ENCODE measurements at regions of chr11 and their contacts with region 1.

Region 1: GRCh38 chr11:71787098-71787823 is 45.7 kb upstream of the DEFB108B start:
- DNase-seq: peak; percentile 97
- H3K4me3 ChIP-seq: peak overlapping the region; percentile 56 to 78 (median 63)
- H3K27ac ChIP-seq: peak overlapping the region; percentile 71 to 92 (median 87)
- H3K4me1 ChIP-seq: peaks cover 0 to 11% (median 3%) of the 10 kb centered on the region in 4 donors
- H3K27me3 ChIP-seq: no peaks in the 10 kb centered on the region
- CTCF ChIP-seq: no peak
- EP300 ChIP-seq: no peak
- POLR2A ChIP-seq: no peak

Region 2: DNA sequence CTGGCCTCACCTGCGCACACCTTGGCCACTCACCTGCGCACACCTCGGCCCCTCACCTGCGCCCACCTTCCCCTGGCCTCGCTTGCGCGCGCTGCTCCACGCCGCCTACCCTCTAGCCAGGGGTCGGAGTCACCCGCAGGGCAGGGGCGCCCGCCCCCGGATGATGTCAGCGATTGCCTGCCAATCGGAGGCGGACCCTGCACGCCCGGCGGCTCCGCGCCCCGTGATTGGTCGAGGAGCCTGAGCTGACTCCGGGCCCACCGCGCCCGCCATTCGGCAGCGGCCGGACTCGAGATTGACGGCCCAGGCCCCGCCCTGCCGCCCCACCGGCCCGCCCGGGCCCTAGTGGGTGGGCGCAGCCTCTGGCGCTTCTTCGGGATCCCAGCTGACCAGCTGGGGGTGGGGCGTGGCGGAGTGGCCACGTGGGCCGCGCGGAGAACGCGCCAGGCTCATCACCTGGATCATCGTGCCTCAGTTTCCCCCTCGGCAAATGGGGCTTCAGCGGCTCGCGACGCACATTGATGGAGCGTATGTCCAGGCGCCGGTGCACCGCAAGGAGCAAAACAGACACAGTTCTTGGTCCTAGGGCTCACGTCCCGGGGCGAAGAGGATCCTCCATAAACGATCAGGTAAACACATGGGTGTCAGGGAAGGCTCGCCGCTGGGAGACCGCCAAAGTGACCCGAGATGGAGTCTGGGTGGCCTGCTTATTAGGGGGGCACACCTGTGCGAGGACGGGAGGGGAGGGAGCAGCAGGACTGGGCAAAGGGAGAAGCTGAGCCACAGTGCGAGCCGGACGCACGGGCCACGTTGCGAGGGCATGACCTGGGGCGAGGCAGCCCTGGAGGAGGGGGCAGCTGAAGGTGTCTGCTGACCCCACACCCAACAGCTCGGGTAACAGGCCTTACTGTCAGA is 338.7 kb before region 1 on chr11 and contains the start of gene DHCR7:
- intact Hi-C with region 1: loop called (anchors 5 kb)
- DNase-seq: peak; percentile 97
- H3K4me3 ChIP-seq: peak within 1 kb of the TSS; percentile 63 to 81 (median 78)
- H3K27ac ChIP-seq: peak within 1 kb of the TSS; percentile 66 to 78 (median 74)
- H3K4me1 ChIP-seq: peaks cover 0 to 36% (median 28%) of the 10 kb centered on the region in 4 donors
- H3K27me3 ChIP-seq: no peaks in the 10 kb centered on the region
- CTCF ChIP-seq: no peak
- EP300 ChIP-seq: no peak
- POLR2A ChIP-seq: no peak
- total RNA-seq, gene DHCR7: 4.1 to 7.5 (median 5.3) TPM

Region 3: DNA sequence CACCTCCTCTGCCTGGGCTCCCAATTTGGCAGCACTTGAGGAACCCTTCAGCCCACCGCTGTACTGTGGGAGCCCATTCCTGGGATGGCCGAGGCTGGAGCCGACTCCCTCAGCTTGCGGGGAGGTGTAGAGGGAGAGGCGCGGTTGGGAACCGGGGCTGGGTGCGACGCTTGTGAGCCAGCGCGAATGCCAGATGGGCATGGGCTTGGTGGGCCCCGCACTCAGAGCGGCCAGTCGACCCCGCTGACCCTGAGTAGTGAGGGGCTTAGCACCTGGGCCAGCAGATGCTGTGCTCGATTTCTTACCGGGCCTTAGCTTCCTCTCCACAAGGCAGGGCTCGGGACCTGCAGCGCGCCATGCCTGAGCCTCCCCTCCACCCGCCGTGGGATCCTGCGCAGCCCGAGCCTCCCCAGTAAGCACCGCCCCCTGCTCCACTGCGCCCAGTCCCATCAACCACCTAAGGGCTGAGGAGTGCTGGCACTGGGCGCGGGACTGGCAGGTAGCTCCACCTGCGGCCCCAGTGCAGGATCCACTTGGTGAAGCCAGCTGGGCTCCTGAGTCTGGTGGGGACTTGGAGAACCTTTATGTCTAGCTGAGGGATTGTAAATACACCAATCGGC is 12.5 kb before region 1 on chr11:
- intact Hi-C with region 1: no loop called
- DNase-seq: no peak
- H3K4me3 ChIP-seq: no peak overlapping the region
- H3K27ac ChIP-seq: no peak overlapping the region
- H3K4me1 ChIP-seq: no peaks in the 10 kb centered on the region
- H3K27me3 ChIP-seq: no peaks in the 10 kb centered on the region
- CTCF ChIP-seq: no peak
- EP300 ChIP-seq: no peak
- POLR2A ChIP-seq: no peak

Region 4: DNA sequence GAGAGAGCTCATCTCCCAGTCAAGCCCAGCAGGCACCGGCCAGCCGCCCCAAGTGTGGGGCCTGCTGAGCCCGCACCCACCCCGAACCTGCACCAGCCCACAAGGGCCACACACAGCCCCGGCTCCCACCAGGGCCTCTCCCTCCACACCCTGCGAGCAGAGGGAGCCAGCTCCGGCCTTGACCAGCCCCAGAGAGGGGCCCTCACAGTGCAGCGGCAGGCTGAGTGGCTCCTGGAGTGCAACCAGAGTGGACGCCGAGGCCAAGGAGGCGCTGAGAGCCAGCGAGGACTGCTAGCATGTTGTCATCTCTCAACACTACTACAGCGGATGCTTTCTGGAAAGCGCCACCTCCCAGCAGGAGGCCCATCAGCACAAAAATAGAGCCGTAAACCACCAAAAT is 56.6 kb after region 1 on chr11:
- intact Hi-C with region 1: no loop called
- DNase-seq: no peak
- H3K4me3 ChIP-seq: no peak overlapping the region
- H3K27ac ChIP-seq: no peak overlapping the region
- H3K4me1 ChIP-seq: no peaks in the 10 kb centered on the region
- H3K27me3 ChIP-seq: no peaks in the 10 kb centered on the region
- CTCF ChIP-seq: no peak
- EP300 ChIP-seq: no peak
- POLR2A ChIP-seq: no peak